Activated naive CD4-positive, alpha-beta T cell treated with anti-CD3 and anti-CD28 coated beads for 36 hours (primary cell): ENCODE measurements at regions of chr17 and their contacts with region 1.

Region 1: GRCh38 chr17:17391668-17392370 is 85.0 kb upstream of the MED9 start:
- DNase-seq: peak; percentile 82
- H3K4me3 Mint-ChIP-seq: peak overlapping the region; percentile 74
- H3K27ac Mint-ChIP-seq: no peak overlapping the region
- H3K4me1 Mint-ChIP-seq: peaks cover 15% of the 10 kb centered on the region
- H3K27me3 Mint-ChIP-seq: no peaks in the 10 kb centered on the region

Region 2: GRCh38 chr17:17440010-17440843 is 48.4 kb after region 1 on chr17:
- CTCF ChIA-PET with region 1: no interaction called
- intact Hi-C with region 1: loop called (anchors 5 kb)
- DNase-seq: peak; percentile 85
- H3K4me3 Mint-ChIP-seq: no peak overlapping the region
- H3K27ac Mint-ChIP-seq: no peak overlapping the region
- H3K4me1 Mint-ChIP-seq: peaks cover 4% of the 10 kb centered on the region
- H3K27me3 Mint-ChIP-seq: no peaks in the 10 kb centered on the region